Naive thymus-derived CD4-positive, alpha-beta T cell (primary cell): ENCODE measurements at regions of chr7 and their contacts with region 1.

Region 1: DNA sequence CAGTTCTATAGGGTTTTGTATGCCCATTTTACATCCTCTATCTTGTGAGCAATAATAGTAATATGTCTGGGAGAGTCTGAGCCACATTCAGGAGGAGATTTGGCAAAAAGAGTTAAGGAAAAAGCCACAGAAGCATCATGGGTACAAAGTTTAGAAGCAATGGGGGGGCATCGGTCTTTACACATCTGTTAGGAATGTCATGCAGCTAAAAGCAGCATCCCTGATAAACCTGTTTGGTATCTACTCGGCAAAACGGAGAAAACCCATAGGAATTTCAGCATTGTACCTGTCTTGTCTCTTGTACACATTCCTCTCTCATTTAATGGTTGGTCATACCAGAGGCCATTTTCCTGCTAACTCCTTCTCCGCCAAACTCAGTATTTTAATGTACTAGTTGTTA is 12.5 kb upstream of the HERPUD2 start:
- DNase-seq: no peak
- ATAC-seq: no peak
- H3K4me3 ChIP-seq: no peak overlapping the region
- H3K4me3 Mint-ChIP-seq: no peak overlapping the region
- H3K27ac ChIP-seq: no peak overlapping the region
- H3K27ac Mint-ChIP-seq: peak overlapping the region in 1 of 9 donors; percentile 15
- H3K4me1 ChIP-seq: peaks cover 8% of the 10 kb centered on the region in 2 donors
- H3K4me1 Mint-ChIP-seq: peaks cover 5 to 30% (median 21%) of the 10 kb centered on the region in 7 donors
- H3K27me3 ChIP-seq: no peaks in the 10 kb centered on the region
- H3K27me3 Mint-ChIP-seq: peaks cover 0 to 21% (median 0%) of the 10 kb centered on the region in 5 donors

Region 2: GRCh38 chr7:35380739-35381224 is 326.6 kb before region 1 on chr7:
- CTCF ChIA-PET with region 1: no interaction called
- POLR2A ChIA-PET with region 1: no interaction called
- intact Hi-C with region 1: no loop called
- DNase-seq: no peak
- ATAC-seq: peak; percentile 36
- H3K4me3 ChIP-seq: no peak overlapping the region
- H3K4me3 Mint-ChIP-seq: no peak overlapping the region
- H3K27ac ChIP-seq: no peak overlapping the region
- H3K27ac Mint-ChIP-seq: no peak overlapping the region
- H3K4me1 ChIP-seq: no peaks in the 10 kb centered on the region
- H3K4me1 Mint-ChIP-seq: no peaks in the 10 kb centered on the region
- H3K27me3 ChIP-seq: no peaks in the 10 kb centered on the region
- H3K27me3 Mint-ChIP-seq: peaks cover 0 to 20% (median 17%) of the 10 kb centered on the region in 5 donors

Region 3: GRCh38 chr7:35723011-35723410 is 15.6 kb after region 1 on chr7:
- CTCF ChIA-PET with region 1: interaction called, 12 read pairs
- POLR2A ChIA-PET with region 1: interaction called, 3 read pairs
- intact Hi-C with region 1: loop called (anchors 1 to 2 kb)
- DNase-seq: peak in 1 of 9 donors; percentile 27
- ATAC-seq: peak; percentile 64
- H3K4me3 ChIP-seq: no peak overlapping the region
- H3K4me3 Mint-ChIP-seq: no peak overlapping the region
- H3K27ac ChIP-seq: no peak overlapping the region
- H3K27ac Mint-ChIP-seq: peak overlapping the region in 2 of 9 donors; percentile 84 to 93
- H3K4me1 ChIP-seq: peaks cover 26 to 38% of the 10 kb centered on the region in 2 donors
- H3K4me1 Mint-ChIP-seq: peaks cover 17 to 55% (median 47%) of the 10 kb centered on the region in 7 donors
- H3K27me3 ChIP-seq: no peaks in the 10 kb centered on the region
- H3K27me3 Mint-ChIP-seq: peaks cover 0 to 14% (median 0%) of the 10 kb centered on the region in 5 donors

Region 4: GRCh38 chr7:35729061-35729783 is 21.8 kb after region 1 on chr7:
- CTCF ChIA-PET with region 1: interaction called, 12 read pairs
- POLR2A ChIA-PET with region 1: interaction called, 3 read pairs
- intact Hi-C with region 1: loop called (anchors 1 kb)
- DNase-seq: peak in 1 of 9 donors; percentile 37
- ATAC-seq: peak; percentile 79
- H3K4me3 ChIP-seq: no peak overlapping the region
- H3K4me3 Mint-ChIP-seq: peak overlapping the region in 2 of 10 donors; percentile 21 to 53
- H3K27ac ChIP-seq: no peak overlapping the region
- H3K27ac Mint-ChIP-seq: peak overlapping the region in 4 of 9 donors; percentile 26 to 73 (median 45)
- H3K4me1 ChIP-seq: peaks cover 26 to 55% of the 10 kb centered on the region in 2 donors
- H3K4me1 Mint-ChIP-seq: peaks cover 23 to 54% (median 47%) of the 10 kb centered on the region in 7 donors
- H3K27me3 ChIP-seq: no peaks in the 10 kb centered on the region
- H3K27me3 Mint-ChIP-seq: peaks cover 0 to 19% (median 0%) of the 10 kb centered on the region in 5 donors

Region 5: GRCh38 chr7:35975851-35976454 is 268.5 kb after region 1 on chr7:
- CTCF ChIA-PET with region 1: no interaction called
- POLR2A ChIA-PET with region 1: no interaction called
- intact Hi-C with region 1: loop called in 1 of 2 experiments (anchors 1 kb)
- DNase-seq: peak in 7 of 9 donors; percentile 22 to 68 (median 58)
- ATAC-seq: peak; percentile 82
- H3K4me3 ChIP-seq: no peak overlapping the region
- H3K4me3 Mint-ChIP-seq: no peak overlapping the region
- H3K27ac ChIP-seq: no peak overlapping the region
- H3K27ac Mint-ChIP-seq: no peak overlapping the region
- H3K4me1 ChIP-seq: peaks cover 0 to 3% of the 10 kb centered on the region in 2 donors
- H3K4me1 Mint-ChIP-seq: peaks cover 0 to 8% (median 6%) of the 10 kb centered on the region in 7 donors
- H3K27me3 ChIP-seq: peaks cover 0 to 7% of the 10 kb centered on the region in 2 donors
- H3K27me3 Mint-ChIP-seq: peaks cover 9 to 56% (median 14%) of the 10 kb centered on the region in 5 donors